ENCODE measurements at regions of chr15 and their contacts with region 1.

Region 1: DNA sequence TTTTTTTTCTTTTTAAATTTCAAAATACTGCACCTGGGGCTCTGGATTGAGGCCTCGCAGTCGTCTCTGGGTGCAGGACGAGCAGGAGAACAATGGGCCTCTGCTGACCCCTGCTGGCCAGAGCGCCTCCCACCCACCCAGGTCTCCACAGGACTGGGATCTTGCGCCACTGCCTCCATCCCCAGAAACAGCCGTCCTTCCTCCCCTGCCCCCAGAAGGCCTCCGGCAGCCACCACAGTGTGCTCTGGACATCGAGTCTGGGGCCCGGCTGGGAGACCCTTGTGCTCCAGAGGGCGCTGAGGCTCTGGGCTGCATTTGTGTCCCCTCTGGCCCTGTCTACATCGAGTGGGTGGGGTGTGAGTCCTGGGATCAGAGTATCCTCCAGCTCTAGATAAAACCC is 6.6 kb upstream of the ACSBG1 start:
- DNase-seq: peak; percentile 55 to 82 (median 69)
- ATAC-seq: peak; percentile 94
- H3K4me3 ChIP-seq: no peak overlapping the region
- H3K4me3 Mint-ChIP-seq: no peak overlapping the region
- H3K27ac ChIP-seq: no peak overlapping the region
- H3K27ac Mint-ChIP-seq: no peak overlapping the region
- H3K4me1 ChIP-seq: no peaks in the 10 kb centered on the region
- H3K4me1 Mint-ChIP-seq: peaks cover 0 to 4% (median 0%) of the 10 kb centered on the region in 7 donors
- H3K27me3 ChIP-seq: no peaks in the 10 kb centered on the region
- H3K27me3 Mint-ChIP-seq: peaks cover 0 to 4% (median 0%) of the 10 kb centered on the region in 5 donors

Region 2: DNA sequence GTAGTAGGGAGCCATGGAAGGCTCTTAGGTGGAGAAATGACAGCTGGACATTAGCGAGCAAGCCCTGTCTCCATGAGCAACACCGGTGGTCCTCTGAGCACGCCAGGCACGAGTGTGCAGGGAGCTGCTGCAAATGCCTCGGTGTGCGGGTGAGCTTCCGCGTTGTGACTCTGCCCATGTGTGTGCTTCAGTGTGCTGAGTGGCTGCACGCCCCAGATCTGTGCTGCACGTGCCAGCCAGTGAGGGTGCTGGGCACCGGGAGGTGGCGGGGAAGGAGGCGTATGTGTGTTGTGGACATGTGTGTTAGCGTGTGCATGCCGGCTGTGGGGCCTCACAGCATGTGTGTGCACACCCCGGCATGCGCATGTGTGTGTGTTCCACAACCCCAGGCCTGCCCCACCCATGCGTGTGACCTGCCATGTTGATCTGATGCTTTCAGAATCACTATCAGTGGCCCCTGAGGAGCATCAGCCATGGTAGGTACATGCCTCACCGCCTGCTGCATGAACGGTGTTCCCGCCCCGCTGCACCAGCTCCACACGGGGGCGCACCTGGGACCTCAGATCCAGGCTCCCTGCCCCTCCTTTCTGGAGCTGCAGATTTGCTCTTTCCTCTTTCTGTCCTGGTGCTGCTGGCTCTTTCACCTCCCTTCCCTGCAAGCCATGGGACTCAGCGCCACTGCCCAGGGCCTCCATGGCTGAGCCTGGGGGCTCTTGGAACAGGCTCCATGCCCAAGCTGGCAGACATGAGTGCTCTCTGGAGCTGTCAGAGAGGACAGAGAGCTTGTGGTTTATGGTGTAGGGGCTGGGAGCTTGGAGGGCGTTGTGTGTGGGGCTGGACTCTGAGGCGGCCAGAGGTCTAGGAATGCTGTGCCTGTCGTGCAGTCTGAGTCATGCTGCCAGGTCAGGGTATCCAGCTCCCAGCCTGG is 332.9 kb before region 1 on chr15:
- CTCF ChIA-PET with region 1: interaction called, 5 read pairs
- POLR2A ChIA-PET with region 1: no interaction called
- intact Hi-C with region 1: loop called (anchors 1 to 2 kb)
- DNase-seq: peak in 4 of 9 donors; percentile 12 to 26 (median 18)
- ATAC-seq: peak; percentile 36
- H3K4me3 ChIP-seq: no peak overlapping the region
- H3K4me3 Mint-ChIP-seq: no peak overlapping the region
- H3K27ac ChIP-seq: no peak overlapping the region
- H3K27ac Mint-ChIP-seq: no peak overlapping the region
- H3K4me1 ChIP-seq: no peaks in the 10 kb centered on the region
- H3K4me1 Mint-ChIP-seq: peaks cover 0 to 5% (median 0%) of the 10 kb centered on the region in 7 donors
- H3K27me3 ChIP-seq: no peaks in the 10 kb centered on the region
- H3K27me3 Mint-ChIP-seq: peaks cover 0 to 4% (median 0%) of the 10 kb centered on the region in 5 donors

Region 3: DNA sequence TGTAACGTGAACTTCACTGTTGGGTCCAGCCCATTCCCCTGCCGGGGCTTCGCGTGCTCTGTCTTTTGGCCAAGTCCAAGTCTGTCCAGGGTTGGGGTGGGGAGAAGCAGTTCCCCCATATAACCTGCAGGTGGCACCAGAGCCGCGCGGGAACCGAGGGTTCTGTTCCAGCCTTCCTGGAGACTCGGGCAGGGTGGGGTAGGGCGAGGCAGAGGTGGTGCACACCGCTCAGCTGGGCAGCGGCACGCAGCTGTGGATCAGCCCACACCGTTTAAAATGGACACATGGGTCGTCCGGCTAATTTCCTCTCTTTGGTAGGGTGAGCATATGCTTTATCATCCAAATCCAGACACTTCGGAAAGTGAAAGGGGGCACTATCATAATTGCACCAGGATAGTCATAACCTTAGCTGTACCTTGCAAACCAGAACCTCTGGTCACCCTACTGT is 281.6 kb before region 1 on chr15:
- CTCF ChIA-PET with region 1: interaction called, 4 read pairs
- POLR2A ChIA-PET with region 1: no interaction called
- intact Hi-C with region 1: loop called in 1 of 2 experiments (anchors 1 kb)
- DNase-seq: peak; percentile 41 to 81 (median 57)
- ATAC-seq: peak; percentile 97
- H3K4me3 ChIP-seq: no peak overlapping the region
- H3K4me3 Mint-ChIP-seq: peak overlapping the region in 5 of 10 donors; percentile 14 to 52 (median 35)
- H3K27ac ChIP-seq: no peak overlapping the region
- H3K27ac Mint-ChIP-seq: no peak overlapping the region
- H3K4me1 ChIP-seq: peaks cover 0 to 4% of the 10 kb centered on the region in 2 donors
- H3K4me1 Mint-ChIP-seq: peaks cover 0 to 17% (median 4%) of the 10 kb centered on the region in 7 donors
- H3K27me3 ChIP-seq: no peaks in the 10 kb centered on the region
- H3K27me3 Mint-ChIP-seq: peaks cover 5 to 38% (median 7%) of the 10 kb centered on the region in 5 donors

Region 4: GRCh38 chr15:77966540-77967290 is 274.3 kb before region 1 on chr15:
- CTCF ChIA-PET with region 1: no interaction called
- POLR2A ChIA-PET with region 1: no interaction called
- intact Hi-C with region 1: loop called (anchors 1 to 2 kb)
- DNase-seq: peak in 5 of 9 donors; percentile 20 to 55 (median 43)
- ATAC-seq: peak; percentile 73
- H3K4me3 ChIP-seq: no peak overlapping the region
- H3K4me3 Mint-ChIP-seq: no peak overlapping the region
- H3K27ac ChIP-seq: no peak overlapping the region
- H3K27ac Mint-ChIP-seq: peak overlapping the region in 2 of 9 donors; percentile 2 to 9
- H3K4me1 ChIP-seq: no peaks in the 10 kb centered on the region
- H3K4me1 Mint-ChIP-seq: peaks cover 0 to 3% (median 0%) of the 10 kb centered on the region in 7 donors
- H3K27me3 ChIP-seq: no peaks in the 10 kb centered on the region
- H3K27me3 Mint-ChIP-seq: peaks cover 0 to 40% (median 0%) of the 10 kb centered on the region in 5 donors

Region 5: GRCh38 chr15:78000091-78000926 is 240.7 kb before region 1 on chr15:
- CTCF ChIA-PET with region 1: no interaction called
- POLR2A ChIA-PET with region 1: no interaction called
- intact Hi-C with region 1: loop called (anchors 1 kb)
- DNase-seq: peak; percentile 66 to 82 (median 78)
- ATAC-seq: peak; percentile 100
- H3K4me3 ChIP-seq: no peak overlapping the region
- H3K4me3 Mint-ChIP-seq: no peak overlapping the region
- H3K27ac ChIP-seq: no peak overlapping the region
- H3K27ac Mint-ChIP-seq: peak overlapping the region; percentile 19 to 87 (median 68)
- H3K4me1 ChIP-seq: no peaks in the 10 kb centered on the region
- H3K4me1 Mint-ChIP-seq: peaks cover 0 to 26% (median 5%) of the 10 kb centered on the region in 7 donors
- H3K27me3 ChIP-seq: no peaks in the 10 kb centered on the region
- H3K27me3 Mint-ChIP-seq: no peaks in the 10 kb centered on the region

Region 6: DNA sequence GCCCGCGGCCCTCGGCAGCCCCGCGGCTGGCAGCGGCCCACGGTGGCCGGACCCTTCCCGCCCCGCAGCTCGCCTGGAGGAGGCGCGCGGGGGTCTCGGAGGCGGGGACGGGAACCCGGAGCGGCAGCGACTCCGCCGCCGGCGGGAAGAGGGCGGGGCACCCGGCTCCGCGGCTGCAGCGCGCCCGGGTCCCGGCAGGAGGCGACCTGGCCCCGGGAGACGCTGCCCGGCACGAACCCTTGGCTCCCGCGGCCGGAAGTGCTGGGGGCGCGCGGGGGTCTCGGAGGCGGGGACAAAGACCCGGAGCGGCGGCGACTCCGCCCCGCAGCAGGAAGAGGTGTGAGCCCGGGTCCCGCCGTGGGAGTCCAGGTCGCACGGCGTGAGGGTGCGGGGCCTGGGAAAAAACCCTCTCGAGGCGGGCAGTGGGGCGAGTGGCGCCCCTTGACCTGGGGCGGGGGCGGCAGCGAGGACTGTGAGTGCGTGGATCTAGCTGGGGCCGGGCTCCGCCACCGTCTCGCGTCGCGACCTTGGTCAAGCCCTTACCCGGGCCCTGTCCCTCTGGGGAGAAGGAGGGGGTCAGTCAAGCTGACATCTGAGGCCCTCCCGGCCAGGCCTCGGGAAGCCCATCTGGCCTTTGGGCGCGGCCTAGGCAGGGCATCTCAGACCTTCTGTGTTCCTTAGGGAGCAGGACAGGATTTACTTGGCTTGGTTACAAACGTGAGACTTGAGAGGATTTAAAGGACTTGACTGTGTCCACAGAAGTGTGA is 109.5 kb before region 1 on chr15 and contains the start of gene CIB2:
- CTCF ChIA-PET with region 1: interaction called, 6 read pairs
- POLR2A ChIA-PET with region 1: no interaction called
- intact Hi-C with region 1: loop called (anchors 1 to 5 kb)
- DNase-seq: peak; percentile 67 to 90 (median 78)
- ATAC-seq: peak; percentile 90
- H3K4me3 ChIP-seq: peak within 1 kb of the TSS; percentile 74
- H3K4me3 Mint-ChIP-seq: peak within 1 kb of the TSS; percentile 80 to 89 (median 84)
- H3K27ac ChIP-seq: peak within 1 kb of the TSS; percentile 86
- H3K27ac Mint-ChIP-seq: peak within 1 kb of the TSS; percentile 68 to 93 (median 89)
- H3K4me1 ChIP-seq: peaks cover 10 to 11% of the 10 kb centered on the region in 2 donors
- H3K4me1 Mint-ChIP-seq: peaks cover 10 to 37% (median 21%) of the 10 kb centered on the region in 7 donors
- H3K27me3 ChIP-seq: no peaks in the 10 kb centered on the region
- H3K27me3 Mint-ChIP-seq: peaks cover 0 to 2% (median 0%) of the 10 kb centered on the region in 5 donors
- total RNA-seq, gene CIB2: 1.0 to 2.0 (median 1.7) TPM

Region 7: GRCh38 chr15:78195735-78196201 is 45.2 kb before region 1 on chr15:
- CTCF ChIA-PET with region 1: interaction called, 17 read pairs
- POLR2A ChIA-PET with region 1: interaction called, 3 read pairs
- intact Hi-C with region 1: loop called in 1 of 2 experiments (anchors 1 kb)
- DNase-seq: peak; percentile 22 to 61 (median 46)
- ATAC-seq: peak; percentile 82
- H3K4me3 ChIP-seq: no peak overlapping the region
- H3K4me3 Mint-ChIP-seq: no peak overlapping the region
- H3K27ac ChIP-seq: no peak overlapping the region
- H3K27ac Mint-ChIP-seq: peak overlapping the region in 1 of 9 donors; percentile 36
- H3K4me1 ChIP-seq: no peaks in the 10 kb centered on the region
- H3K4me1 Mint-ChIP-seq: peaks cover 0 to 9% (median 0%) of the 10 kb centered on the region in 7 donors
- H3K27me3 ChIP-seq: no peaks in the 10 kb centered on the region
- H3K27me3 Mint-ChIP-seq: peaks cover 0 to 11% (median 0%) of the 10 kb centered on the region in 5 donors

Region 8: GRCh38 chr15:78340231-78341056 is 99.4 kb after region 1 on chr15 and contains the start of gene CRABP1:
- CTCF ChIA-PET with region 1: no interaction called
- POLR2A ChIA-PET with region 1: no interaction called
- intact Hi-C with region 1: no loop called
- DNase-seq: no peak
- ATAC-seq: no peak
- H3K4me3 ChIP-seq: no peak within 1 kb of the TSS
- H3K4me3 Mint-ChIP-seq: peak within 1 kb of the TSS in 2 of 10 donors; percentile 13 to 40
- H3K27ac ChIP-seq: no peak within 1 kb of the TSS
- H3K27ac Mint-ChIP-seq: no peak within 1 kb of the TSS
- H3K4me1 ChIP-seq: no peaks in the 10 kb centered on the region
- H3K4me1 Mint-ChIP-seq: peaks cover 0 to 9% (median 4%) of the 10 kb centered on the region in 7 donors
- H3K27me3 ChIP-seq: peaks cover 0 to 10% of the 10 kb centered on the region in 2 donors
- H3K27me3 Mint-ChIP-seq: peaks cover 29 to 68% (median 47%) of the 10 kb centered on the region in 5 donors
- total RNA-seq, gene CRABP1: not detected

Measured in naive thymus-derived CD4-positive, alpha-beta T cell (primary cell).